T-cell (primary cell): ENCODE measurements at regions of chr1 and their contacts with region 1.

Region 1: DNA sequence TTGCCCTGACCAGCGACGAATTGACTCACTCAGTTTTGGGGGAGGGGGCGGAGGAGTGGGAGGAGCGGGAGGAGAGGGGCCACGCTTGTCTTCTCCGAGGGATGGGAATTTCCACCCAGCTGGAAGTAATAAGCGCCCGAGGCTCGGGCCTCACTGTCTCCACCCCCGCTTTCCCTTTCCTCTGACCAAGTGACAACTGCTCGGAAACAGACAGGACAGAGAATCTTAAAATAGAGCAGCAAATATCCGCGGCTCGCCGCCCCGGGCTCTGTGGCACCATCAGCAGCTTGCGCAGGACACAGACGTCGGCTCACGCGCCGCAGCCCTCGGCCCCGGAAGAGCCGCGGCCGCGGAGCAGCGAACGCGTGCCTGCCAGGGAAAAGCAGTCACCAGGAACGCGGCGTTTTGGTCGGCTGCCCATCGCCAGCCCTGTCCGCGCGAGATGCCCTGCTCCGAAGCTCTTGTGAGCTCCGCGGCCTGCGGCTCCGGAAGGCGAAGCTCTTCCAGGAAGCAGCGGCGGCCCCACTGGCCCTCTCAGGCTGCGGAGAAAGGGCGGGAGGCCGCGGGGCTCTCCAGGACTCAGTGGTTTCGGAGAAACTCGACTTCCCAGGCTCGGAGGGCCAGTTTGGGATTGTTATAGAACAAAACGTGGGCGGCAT is 10.7 kb upstream of the RGS16 start:
- DNase-seq: peak in 15 of 35 experiments; percentile 16 to 67 (median 36)
- ATAC-seq: peak in 3 of 4 experiments; percentile 11 to 40 (median 25)
- H3K4me3 ChIP-seq: peak overlapping the region; percentile 56 to 94
- H3K4me3 Mint-ChIP-seq: peak overlapping the region; percentile 76 to 83 (median 79)
- H3K27ac ChIP-seq: no peak overlapping the region
- H3K27ac Mint-ChIP-seq: no peak overlapping the region
- H3K4me1 ChIP-seq: peaks cover 19 to 32% of the 10 kb centered on the region in 2 experiments
- H3K4me1 Mint-ChIP-seq: peaks cover 36 to 40% (median 39%) of the 10 kb centered on the region in 3 donors
- H3K27me3 ChIP-seq: peaks cover 16 to 50% of the 10 kb centered on the region in 2 experiments
- H3K27me3 Mint-ChIP-seq: peaks cover 25 to 34% of the 10 kb centered on the region in 2 donors

Region 2: GRCh38 chr1:182595641-182596240 is 19.2 kb before region 1 on chr1:
- CTCF ChIA-PET with region 1: interaction called, 4 to 21 read pairs
- POLR2A ChIA-PET with region 1: interaction called, 4 read pairs
- DNase-seq: peak in 34 of 35 experiments; percentile 18 to 77 (median 52)
- ATAC-seq: peak; percentile 60 to 82 (median 67)
- H3K4me3 ChIP-seq: no peak overlapping the region
- H3K4me3 Mint-ChIP-seq: no peak overlapping the region
- H3K27ac ChIP-seq: no peak overlapping the region
- H3K27ac Mint-ChIP-seq: no peak overlapping the region
- H3K4me1 ChIP-seq: no peaks in the 10 kb centered on the region
- H3K4me1 Mint-ChIP-seq: peaks cover 0 to 3% (median 3%) of the 10 kb centered on the region in 3 donors
- H3K27me3 ChIP-seq: no peaks in the 10 kb centered on the region
- H3K27me3 Mint-ChIP-seq: no peaks in the 10 kb centered on the region

Region 3: DNA sequence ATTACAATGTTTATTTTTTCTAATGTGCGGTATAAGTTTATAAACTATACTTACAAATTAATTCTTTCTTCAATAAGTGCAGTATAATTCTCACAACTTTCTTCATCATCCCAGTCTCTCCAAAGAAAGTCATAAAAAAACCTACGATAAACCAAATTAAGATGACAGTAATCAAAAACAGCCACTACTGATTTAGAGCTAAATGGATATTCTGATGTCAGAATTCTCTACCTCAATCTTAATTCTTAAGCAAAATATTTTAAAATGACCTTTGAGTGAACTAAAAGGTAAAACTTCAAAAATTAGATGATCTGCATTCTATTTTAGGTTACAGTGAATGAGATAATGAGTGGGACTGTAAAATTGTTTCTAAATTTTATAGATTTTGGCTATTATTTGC is 324.5 kb after region 1 on chr1:
- CTCF ChIA-PET with region 1: no interaction called
- POLR2A ChIA-PET with region 1: interaction called in 1 of 2 experiments, 18 read pairs
- DNase-seq: no peak
- ATAC-seq: no peak
- H3K4me3 ChIP-seq: no peak overlapping the region
- H3K4me3 Mint-ChIP-seq: no peak overlapping the region
- H3K27ac ChIP-seq: no peak overlapping the region
- H3K27ac Mint-ChIP-seq: no peak overlapping the region
- H3K4me1 ChIP-seq: no peaks in the 10 kb centered on the region
- H3K4me1 Mint-ChIP-seq: peaks cover 0 to 2% (median 0%) of the 10 kb centered on the region in 3 donors
- H3K27me3 ChIP-seq: peaks cover 2 to 16% of the 10 kb centered on the region in 2 experiments
- H3K27me3 Mint-ChIP-seq: peaks cover 30 to 43% of the 10 kb centered on the region in 2 donors